ENCODE measurements at regions of chr19 and their contacts with region 1.

Region 1: GRCh38 chr19:36915992-36916830 is at the starts of genes ZNF568 and ZNF829:
- DNase-seq: peak; percentile 78 to 96 (median 93)
- ATAC-seq: peak; percentile 97
- H3K4me3 ChIP-seq: peak within 1 kb of the TSS; percentile 95
- H3K4me3 Mint-ChIP-seq: peak within 1 kb of the TSS; percentile 87 to 99 (median 95)
- H3K27ac ChIP-seq: peak within 1 kb of the TSS; percentile 94
- H3K27ac Mint-ChIP-seq: peak within 1 kb of the TSS; percentile 90 to 97 (median 94)
- H3K4me1 ChIP-seq: peaks cover 8 to 13% of the 10 kb centered on the region in 2 donors
- H3K4me1 Mint-ChIP-seq: peaks cover 19 to 46% (median 29%) of the 10 kb centered on the region in 7 donors
- H3K27me3 ChIP-seq: no peaks in the 10 kb centered on the region
- H3K27me3 Mint-ChIP-seq: no peaks in the 10 kb centered on the region
- total RNA-seq, gene ZNF568: 8.2 to 18.0 (median 9.3) TPM
- total RNA-seq, gene ZNF829: 2.6 to 9.0 (median 6.3) TPM

Region 2: DNA sequence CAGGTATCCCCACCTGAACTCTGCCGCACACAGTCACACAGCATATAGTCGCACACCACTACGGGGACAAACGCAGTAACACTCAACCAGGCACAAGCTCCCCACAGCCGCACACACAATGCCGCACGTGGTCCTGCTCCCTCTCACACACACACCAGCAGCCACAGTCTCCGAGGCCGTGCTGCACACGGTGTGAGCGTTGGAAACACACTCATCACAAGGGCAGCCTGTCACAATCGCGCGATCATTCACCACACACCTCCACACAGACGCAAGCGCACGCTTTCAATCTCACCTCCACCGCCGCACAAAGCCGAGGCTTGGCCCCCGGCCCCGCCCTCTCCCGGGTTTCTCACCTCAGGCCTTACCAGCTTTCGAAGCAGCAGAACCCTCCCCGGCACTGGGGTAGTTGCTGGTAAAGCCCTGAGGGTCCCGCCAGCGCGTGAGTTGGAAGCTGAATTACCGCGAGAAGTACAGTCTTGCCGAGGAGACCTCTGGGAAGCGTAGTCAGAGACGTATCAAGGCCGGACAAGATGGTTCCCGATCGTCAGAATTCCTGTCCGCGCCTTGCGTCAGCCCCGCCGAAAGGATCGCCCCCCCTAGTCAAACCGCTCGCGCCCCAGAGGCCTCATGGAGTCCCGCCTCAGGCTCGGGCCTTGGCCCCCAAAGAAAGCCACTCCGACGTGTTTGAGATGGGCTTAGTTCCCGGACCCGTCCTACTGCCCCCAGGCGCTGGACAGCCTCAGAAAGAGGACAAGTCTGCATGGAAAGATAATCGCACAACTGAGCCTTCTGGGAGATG is 426.9 kb before region 1 on chr19 and contains the start of gene ZNF566:
- CTCF ChIA-PET with region 1: no interaction called
- POLR2A ChIA-PET with region 1: no interaction called
- intact Hi-C with region 1: loop called (anchors 1 to 5 kb)
- DNase-seq: peak; percentile 74 to 98 (median 94)
- ATAC-seq: peak; percentile 95
- H3K4me3 ChIP-seq: peak within 1 kb of the TSS; percentile 97
- H3K4me3 Mint-ChIP-seq: peak within 1 kb of the TSS; percentile 93 to 99 (median 98)
- H3K27ac ChIP-seq: peak within 1 kb of the TSS; percentile 90
- H3K27ac Mint-ChIP-seq: peak within 1 kb of the TSS; percentile 93 to 99 (median 98)
- H3K4me1 ChIP-seq: peaks cover 9 to 10% of the 10 kb centered on the region in 2 donors
- H3K4me1 Mint-ChIP-seq: peaks cover 22 to 43% (median 30%) of the 10 kb centered on the region in 7 donors
- H3K27me3 ChIP-seq: no peaks in the 10 kb centered on the region
- H3K27me3 Mint-ChIP-seq: no peaks in the 10 kb centered on the region
- total RNA-seq, gene ZNF566: 9.2 to 29.8 (median 9.3) TPM

Region 3: DNA sequence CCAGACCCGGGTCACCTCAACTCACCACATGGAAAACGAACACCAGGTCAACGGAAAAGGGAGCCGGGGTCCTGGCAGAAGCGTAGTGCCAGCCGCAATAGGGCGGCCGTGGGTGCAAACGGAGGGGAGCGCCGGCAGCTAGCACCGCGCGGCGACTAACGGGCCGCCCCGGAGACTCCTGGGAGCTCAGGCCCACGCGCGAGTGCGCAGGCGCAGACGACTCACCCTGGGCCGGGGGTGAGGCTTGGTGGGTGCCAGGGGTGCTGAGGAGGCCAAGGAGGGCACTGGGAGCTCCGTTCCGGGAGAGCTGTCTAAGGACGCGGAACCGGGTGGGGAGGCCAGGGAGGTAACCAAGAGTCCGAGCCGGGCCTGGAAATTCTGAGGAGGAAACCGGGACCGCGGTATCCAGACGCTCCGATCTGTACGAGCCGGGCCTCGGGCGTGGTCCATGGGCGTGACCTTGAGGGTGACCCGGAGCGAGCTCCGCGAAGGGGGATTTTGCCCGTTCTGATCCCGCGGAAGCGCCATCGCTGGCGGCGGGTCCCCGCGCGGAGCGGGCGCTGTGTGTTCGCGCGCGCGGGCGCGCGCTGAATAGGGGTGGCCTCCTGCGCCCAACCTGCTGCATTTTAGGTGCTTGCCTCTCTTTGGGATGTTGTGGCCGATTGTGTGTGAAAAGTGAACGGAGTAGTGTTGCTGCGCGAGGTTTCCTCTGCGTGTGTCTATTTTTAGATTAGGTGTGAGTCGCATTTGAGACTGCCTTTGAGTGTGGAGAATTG is 310.9 kb before region 1 on chr19 and contains the start of gene ZNF382:
- CTCF ChIA-PET with region 1: no interaction called
- POLR2A ChIA-PET with region 1: interaction called, 6 read pairs
- intact Hi-C with region 1: loop called (anchors 1 to 10 kb)
- DNase-seq: peak; percentile 77 to 92 (median 86)
- ATAC-seq: peak; percentile 80
- H3K4me3 ChIP-seq: peak within 1 kb of the TSS; percentile 95
- H3K4me3 Mint-ChIP-seq: peak within 1 kb of the TSS; percentile 81 to 99 (median 93)
- H3K27ac ChIP-seq: peak within 1 kb of the TSS; percentile 84
- H3K27ac Mint-ChIP-seq: peak within 1 kb of the TSS; percentile 78 to 98 (median 93)
- H3K4me1 ChIP-seq: peaks cover 7 to 15% of the 10 kb centered on the region in 2 donors
- H3K4me1 Mint-ChIP-seq: peaks cover 20 to 32% (median 27%) of the 10 kb centered on the region in 7 donors
- H3K27me3 ChIP-seq: no peaks in the 10 kb centered on the region
- H3K27me3 Mint-ChIP-seq: no peaks in the 10 kb centered on the region
- total RNA-seq, gene ZNF382: 5.4 to 20.2 (median 12.2) TPM

Region 4: GRCh38 chr19:36796076-36796992 is 119.9 kb before region 1 on chr19:
- CTCF ChIA-PET with region 1: no interaction called
- POLR2A ChIA-PET with region 1: no interaction called
- intact Hi-C with region 1: loop called in 1 of 2 experiments (anchors 2 kb)
- DNase-seq: no peak
- ATAC-seq: no peak
- H3K4me3 ChIP-seq: peak overlapping the region; percentile 100
- H3K4me3 Mint-ChIP-seq: peak overlapping the region; percentile 87 to 99 (median 98)
- H3K27ac ChIP-seq: peak overlapping the region; percentile 79
- H3K27ac Mint-ChIP-seq: peak overlapping the region; percentile 87 to 100 (median 98)
- H3K4me1 ChIP-seq: no peaks in the 10 kb centered on the region
- H3K4me1 Mint-ChIP-seq: peaks cover 0 to 28% (median 16%) of the 10 kb centered on the region in 7 donors
- H3K27me3 ChIP-seq: no peaks in the 10 kb centered on the region
- H3K27me3 Mint-ChIP-seq: peaks cover 0 to 10% (median 9%) of the 10 kb centered on the region in 5 donors

Region 5: GRCh38 chr19:36973021-36973843 is 57.0 kb after region 1 on chr19:
- CTCF ChIA-PET with region 1: no interaction called
- POLR2A ChIA-PET with region 1: interaction called, 4 read pairs
- intact Hi-C with region 1: loop called (anchors 1 kb)
- DNase-seq: peak; percentile 56 to 84 (median 73)
- ATAC-seq: peak; percentile 96
- H3K4me3 ChIP-seq: peak overlapping the region; percentile 100
- H3K4me3 Mint-ChIP-seq: peak overlapping the region; percentile 92 to 99 (median 97)
- H3K27ac ChIP-seq: peak overlapping the region; percentile 75
- H3K27ac Mint-ChIP-seq: peak overlapping the region; percentile 83 to 97 (median 92)
- H3K4me1 ChIP-seq: peaks cover 5 to 15% of the 10 kb centered on the region in 2 donors
- H3K4me1 Mint-ChIP-seq: peaks cover 9 to 22% (median 13%) of the 10 kb centered on the region in 7 donors
- H3K27me3 ChIP-seq: no peaks in the 10 kb centered on the region
- H3K27me3 Mint-ChIP-seq: no peaks in the 10 kb centered on the region

Region 6: DNA sequence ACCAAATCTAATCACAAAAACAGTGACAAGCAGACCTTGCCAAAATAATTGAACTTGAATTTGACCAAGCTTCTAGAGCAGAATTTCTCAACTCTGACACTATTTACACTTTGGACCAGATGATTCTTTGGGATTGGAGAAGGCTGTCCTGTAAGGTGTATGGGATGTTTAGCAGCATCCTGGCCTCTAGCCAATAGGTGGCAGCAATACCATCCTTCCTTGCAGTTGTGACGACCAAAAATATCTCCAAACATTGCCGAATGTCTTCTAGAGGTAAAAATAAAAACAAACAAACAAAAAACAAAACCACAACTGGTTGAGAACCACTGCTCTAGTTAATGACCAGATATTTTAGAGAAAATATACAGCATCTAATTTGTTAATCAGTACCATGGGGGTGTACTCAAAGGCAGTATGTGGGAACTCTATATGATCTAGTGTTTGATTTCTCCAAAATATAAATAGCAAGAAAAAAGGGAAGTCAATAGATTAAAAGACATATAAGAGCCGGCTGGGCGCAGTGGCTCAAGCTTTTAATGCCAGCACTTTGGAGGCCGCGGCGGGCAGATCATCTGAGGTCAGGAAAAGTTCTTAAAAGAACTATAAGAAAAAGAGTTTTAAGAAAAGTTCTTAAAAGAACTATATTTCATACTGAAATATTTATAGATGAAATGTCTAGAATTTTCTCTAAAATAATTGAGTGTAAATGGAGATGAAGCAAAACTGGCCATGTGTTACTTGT is 393.8 kb after region 1 on chr19:
- CTCF ChIA-PET with region 1: no interaction called
- POLR2A ChIA-PET with region 1: no interaction called
- intact Hi-C with region 1: loop called in 1 of 2 experiments (anchors 10 kb)
- DNase-seq: peak in 3 of 9 donors; percentile 18 to 38 (median 32)
- ATAC-seq: peak; percentile 36
- H3K4me3 ChIP-seq: no peak overlapping the region
- H3K4me3 Mint-ChIP-seq: no peak overlapping the region
- H3K27ac ChIP-seq: no peak overlapping the region
- H3K27ac Mint-ChIP-seq: peak overlapping the region in 1 of 9 donors; percentile 28
- H3K4me1 ChIP-seq: peaks cover 0 to 5% of the 10 kb centered on the region in 2 donors
- H3K4me1 Mint-ChIP-seq: peaks cover 0 to 21% (median 13%) of the 10 kb centered on the region in 7 donors
- H3K27me3 ChIP-seq: no peaks in the 10 kb centered on the region
- H3K27me3 Mint-ChIP-seq: peaks cover 0 to 27% (median 19%) of the 10 kb centered on the region in 5 donors

Region 7: GRCh38 chr19:37594304-37594981 is 678.2 kb after region 1 on chr19 and contains the starts of genes ZNF540 and ZNF571:
- CTCF ChIA-PET with region 1: no interaction called
- POLR2A ChIA-PET with region 1: no interaction called
- intact Hi-C with region 1: loop called (anchors 1 kb)
- DNase-seq: peak; percentile 70 to 95 (median 92)
- ATAC-seq: peak; percentile 96
- H3K4me3 ChIP-seq: peak within 1 kb of the TSS; percentile 80
- H3K4me3 Mint-ChIP-seq: peak within 1 kb of the TSS; percentile 94 to 100 (median 98)
- H3K27ac ChIP-seq: peak within 1 kb of the TSS; percentile 93
- H3K27ac Mint-ChIP-seq: peak within 1 kb of the TSS; percentile 93 to 100 (median 99)
- H3K4me1 ChIP-seq: peaks cover 7 to 18% of the 10 kb centered on the region in 2 donors
- H3K4me1 Mint-ChIP-seq: peaks cover 13 to 56% (median 39%) of the 10 kb centered on the region in 7 donors
- H3K27me3 ChIP-seq: no peaks in the 10 kb centered on the region
- H3K27me3 Mint-ChIP-seq: no peaks in the 10 kb centered on the region
- total RNA-seq, gene ZNF540: 0.99 to 22.7 (median 17.6) TPM
- total RNA-seq, gene ZNF571: 1.5 to 12.4 (median 9.0) TPM